H1 (cell line): ENCODE measurements at regions of chrX and their contacts with region 1.

Region 1: GRCh38 chrX:153470435-153471363 is at the start of gene HAUS7:
- DNase-seq: peak; percentile 65 to 88
- H3K4me3 ChIP-seq: peak within 1 kb of the TSS; percentile 53 to 82 (median 76)
- H3K27ac ChIP-seq: no peak within 1 kb of the TSS
- H3K4me1 ChIP-seq: peaks cover 0 to 9% (median 0%) of the 10 kb centered on the region in 4 experiments; a peak in 1 of 7 replicates
- H3K27me3 ChIP-seq: peaks cover 3 to 15% (median 11%) of the 10 kb centered on the region in 4 experiments; a peak in 6 of 7 replicates
- CTCF ChIP-seq: peak in 2 of 3 experiments; percentile 78 to 98; a peak in 3 of 4 replicates
- EP300 ChIP-seq: no peak
- POLR2A ChIP-seq: peak in 1 of 2 experiments; percentile 42; a peak in 1 of 3 replicates
- RAD21 ChIP-seq: peak; percentile 65 to 71
- total RNA-seq, gene HAUS7: 53.4 and 54.0 TPM in 2 replicates

Region 2: GRCh38 chrX:153319295-153320046 is 151.2 kb before region 1 on chrX:
- CTCF ChIA-PET with region 1: no interaction called
- POLR2A ChIA-PET with region 1: no interaction called
- DNase-seq: no peak
- H3K4me3 ChIP-seq: no peak overlapping the region
- H3K27ac ChIP-seq: no peak overlapping the region
- H3K4me1 ChIP-seq: peaks cover 0 to 4% (median 3%) of the 10 kb centered on the region in 4 experiments; a peak in 6 of 7 replicates
- H3K27me3 ChIP-seq: peaks cover 0 to 11% (median 9%) of the 10 kb centered on the region in 4 experiments; a peak in 5 of 7 replicates
- CTCF ChIP-seq: no peak
- EP300 ChIP-seq: no peak
- POLR2A ChIP-seq: no peak
- RAD21 ChIP-seq: no peak

Region 3: DNA sequence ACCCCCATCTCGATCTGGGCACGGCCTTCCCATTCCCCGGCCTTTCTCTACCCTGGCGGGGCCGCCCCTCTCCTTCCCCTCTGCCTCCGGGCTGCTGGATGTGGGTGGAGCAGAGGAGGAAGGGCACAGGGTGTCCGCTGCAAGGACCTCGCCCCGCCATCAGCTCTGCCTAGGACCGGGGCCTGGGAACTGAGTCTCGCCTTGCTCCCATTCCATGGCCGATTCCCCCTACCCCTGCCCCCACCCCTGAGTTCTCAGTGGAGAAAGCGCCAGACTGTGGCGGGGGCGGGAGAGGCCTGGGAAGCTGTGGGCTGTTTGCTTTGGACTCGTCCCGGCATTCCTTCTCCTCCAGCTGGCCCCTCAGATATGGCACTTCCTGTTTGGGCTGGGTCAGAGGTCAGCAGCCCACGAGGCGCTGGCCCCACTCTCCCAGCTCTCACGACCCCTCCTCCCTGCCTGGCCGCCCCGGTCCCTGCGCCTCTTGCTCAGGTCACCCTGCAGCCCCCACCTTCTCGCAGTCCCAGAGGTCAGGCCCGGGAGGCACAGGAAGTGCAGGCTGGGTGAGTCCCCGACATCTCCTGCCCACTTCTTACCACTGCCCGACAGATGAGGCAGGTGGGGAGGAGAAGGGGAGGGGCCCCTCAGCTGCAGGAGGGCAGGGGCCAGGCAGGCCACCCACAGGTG is 17.7 kb after region 1 on chrX:
- CTCF ChIA-PET with region 1: interaction called, 42 read pairs
- POLR2A ChIA-PET with region 1: interaction called, 4 read pairs
- DNase-seq: no peak
- H3K4me3 ChIP-seq: no peak overlapping the region
- H3K27ac ChIP-seq: no peak overlapping the region
- H3K4me1 ChIP-seq: peaks cover 0 to 15% (median 4%) of the 10 kb centered on the region in 4 experiments; a peak in 4 of 7 replicates
- H3K27me3 ChIP-seq: no peaks in the 10 kb centered on the region; a peak in 1 of 7 replicates
- CTCF ChIP-seq: no peak
- EP300 ChIP-seq: no peak
- POLR2A ChIP-seq: no peak
- RAD21 ChIP-seq: no peak